MCF 10A (cell line): ENCODE measurements at regions of chr22 and their contacts with region 1.

Region 1: GRCh38 chr22:25777870-25778269 is 35.9 kb downstream of the MYO18B start:
- DNase-seq: peak; percentile 71
- H3K4me3 Mint-ChIP-seq: no peak overlapping the region
- H3K27ac Mint-ChIP-seq: no peak overlapping the region
- H3K4me1 Mint-ChIP-seq: no peaks in the 10 kb centered on the region
- H3K27me3 Mint-ChIP-seq: no peaks in the 10 kb centered on the region
- CTCF ChIP-seq: peak; percentile 31

Region 2: DNA sequence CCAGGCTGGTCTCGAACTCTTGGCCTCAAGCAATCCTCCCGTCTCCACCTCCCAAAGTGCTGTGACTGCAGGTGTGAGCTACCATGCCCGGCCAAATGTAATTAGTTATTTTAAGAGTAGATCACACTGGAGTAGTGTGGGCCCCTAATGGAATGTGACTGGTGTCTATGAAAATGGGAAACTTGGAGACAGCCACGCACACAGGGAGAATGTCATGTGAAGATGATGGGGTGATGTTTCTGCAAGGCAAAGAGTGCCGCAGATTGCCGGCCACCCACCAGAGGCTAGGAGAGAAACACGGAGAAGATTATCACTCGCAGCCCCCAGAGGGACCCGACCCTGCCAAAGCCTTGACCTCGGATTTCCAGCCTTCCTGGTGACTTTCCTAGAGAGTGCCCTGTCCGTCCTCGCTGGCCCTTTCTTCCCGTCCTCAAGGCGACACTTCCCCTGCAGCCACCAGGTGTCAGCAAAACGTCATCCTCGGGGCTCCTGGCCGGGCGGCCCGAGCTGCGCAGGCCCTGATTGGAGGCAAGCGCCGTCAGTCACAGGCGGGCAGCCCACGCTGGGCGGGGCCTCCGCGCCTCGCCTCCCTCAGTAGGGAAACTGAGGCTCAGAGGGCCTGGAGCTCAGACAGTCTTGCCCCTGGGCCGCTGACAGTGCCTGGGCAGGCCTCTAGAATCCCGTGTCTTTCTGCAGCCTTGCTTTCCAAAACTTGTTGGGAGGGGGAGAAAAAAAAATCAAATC is 542.2 kb before region 1 on chr22:
- CTCF ChIA-PET with region 1: interaction called, 5 read pairs
- POLR2A ChIA-PET with region 1: no interaction called
- intact Hi-C with region 1: loop called (anchors 5 kb)
- DNase-seq: peak; percentile 80
- H3K4me3 Mint-ChIP-seq: no peak overlapping the region
- H3K27ac Mint-ChIP-seq: no peak overlapping the region
- H3K4me1 Mint-ChIP-seq: peaks cover 7% of the 10 kb centered on the region
- H3K27me3 Mint-ChIP-seq: peaks cover 8% of the 10 kb centered on the region
- CTCF ChIP-seq: peak; percentile 86

Region 3: DNA sequence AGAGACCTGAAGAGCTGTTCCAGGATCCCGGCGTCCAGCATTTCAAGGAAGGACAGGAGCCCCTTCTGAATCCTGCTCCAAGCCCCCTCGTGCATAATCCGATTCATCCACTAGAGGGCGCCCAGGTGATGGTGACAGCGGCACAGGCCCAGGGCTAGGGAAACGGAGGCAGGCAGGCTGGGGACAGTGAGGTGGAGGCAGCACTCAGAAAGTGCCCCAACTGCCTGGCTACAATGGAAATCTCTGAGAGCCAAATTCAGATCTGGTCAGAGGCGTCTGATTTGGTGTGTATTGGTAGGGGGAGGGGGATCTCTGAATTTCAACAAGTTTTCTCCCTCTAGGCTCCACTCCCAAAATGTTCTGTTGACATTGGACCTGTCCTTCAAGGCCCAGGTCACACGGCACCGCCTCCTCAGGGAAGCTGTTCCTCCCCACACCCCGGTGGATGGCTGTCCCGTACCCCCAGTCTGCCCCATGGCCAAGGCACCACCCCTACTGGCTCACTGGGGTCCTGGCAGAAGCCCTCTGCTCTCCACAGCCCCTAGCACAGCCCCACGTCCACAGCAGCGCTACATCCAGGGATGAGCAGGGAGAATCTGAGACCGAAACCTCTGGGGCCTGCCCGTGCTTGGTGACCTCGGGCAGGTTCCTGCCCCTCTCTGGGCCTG is 415.5 kb before region 1 on chr22:
- CTCF ChIA-PET with region 1: interaction called, 5 read pairs
- POLR2A ChIA-PET with region 1: no interaction called
- intact Hi-C with region 1: loop called (anchors 5 kb)
- DNase-seq: peak; percentile 56
- H3K4me3 Mint-ChIP-seq: no peak overlapping the region
- H3K27ac Mint-ChIP-seq: no peak overlapping the region
- H3K4me1 Mint-ChIP-seq: peaks cover 6% of the 10 kb centered on the region
- H3K27me3 Mint-ChIP-seq: no peaks in the 10 kb centered on the region
- CTCF ChIP-seq: peak; percentile 84

Region 4: GRCh38 chr22:25465949-25466348 is 311.9 kb before region 1 on chr22:
- CTCF ChIA-PET with region 1: interaction called, 51 read pairs
- POLR2A ChIA-PET with region 1: no interaction called
- intact Hi-C with region 1: loop called (anchors 1 kb)
- DNase-seq: no peak
- H3K4me3 Mint-ChIP-seq: no peak overlapping the region
- H3K27ac Mint-ChIP-seq: peak overlapping the region; percentile 31
- H3K4me1 Mint-ChIP-seq: no peaks in the 10 kb centered on the region
- H3K27me3 Mint-ChIP-seq: no peaks in the 10 kb centered on the region
- CTCF ChIP-seq: no peak

Region 5: DNA sequence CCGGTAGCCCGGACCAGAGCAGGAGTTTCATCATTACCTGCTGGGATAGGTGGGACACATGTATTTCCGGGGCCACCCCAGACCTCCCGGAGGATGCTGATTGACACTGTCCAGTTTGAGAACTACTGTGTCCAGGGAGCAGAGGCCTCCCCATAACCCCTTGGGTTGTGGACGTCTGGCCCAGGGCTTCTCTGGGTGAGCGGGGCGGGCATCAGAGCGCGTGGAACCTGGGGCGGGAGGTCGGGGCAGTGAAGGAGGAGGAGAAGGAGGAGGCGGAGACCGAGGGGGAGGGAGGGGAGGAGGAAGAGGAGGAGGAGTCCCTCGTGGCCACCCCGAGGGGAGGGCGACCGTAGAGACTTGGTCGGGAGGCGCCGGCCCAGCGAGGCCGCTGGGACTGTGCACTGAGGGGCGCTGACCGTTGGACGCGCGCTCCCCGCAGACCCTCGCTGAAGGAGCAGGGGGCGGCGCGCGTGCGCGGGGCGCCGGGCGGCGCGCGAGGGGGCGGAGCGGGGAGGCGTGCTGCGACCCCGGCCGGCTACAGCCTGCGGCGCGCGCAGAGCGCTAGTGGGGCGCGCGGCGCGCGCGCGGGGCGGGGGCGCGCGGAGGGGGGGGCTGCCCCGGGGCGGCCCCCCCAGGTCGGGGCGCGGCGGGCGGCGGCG is 213.4 kb before region 1 on chr22 and contains the start of gene GRK3:
- CTCF ChIA-PET with region 1: interaction called, 27 read pairs
- POLR2A ChIA-PET with region 1: no interaction called
- intact Hi-C with region 1: loop called (anchors 1 kb)
- DNase-seq: peak; percentile 75
- H3K4me3 Mint-ChIP-seq: peak within 1 kb of the TSS; percentile 77
- H3K27ac Mint-ChIP-seq: peak within 1 kb of the TSS; percentile 3
- H3K4me1 Mint-ChIP-seq: peaks cover 5% of the 10 kb centered on the region
- H3K27me3 Mint-ChIP-seq: no peaks in the 10 kb centered on the region
- CTCF ChIP-seq: no peak
- total RNA-seq, gene GRK3: 6.5 and 7.9 TPM in 2 replicates

Region 6: GRCh38 chr22:25702040-25702439 is 75.8 kb before region 1 on chr22:
- CTCF ChIA-PET with region 1: interaction called, 15 read pairs
- POLR2A ChIA-PET with region 1: no interaction called
- intact Hi-C with region 1: loop called (anchors 1 kb)
- DNase-seq: peak; percentile 16
- H3K4me3 Mint-ChIP-seq: no peak overlapping the region
- H3K27ac Mint-ChIP-seq: no peak overlapping the region
- H3K4me1 Mint-ChIP-seq: no peaks in the 10 kb centered on the region
- H3K27me3 Mint-ChIP-seq: no peaks in the 10 kb centered on the region
- CTCF ChIP-seq: peak; percentile 55

Region 7: GRCh38 chr22:25765801-25766200 is 12.1 kb before region 1 on chr22:
- CTCF ChIA-PET with region 1: interaction called, 16 read pairs
- POLR2A ChIA-PET with region 1: no interaction called
- intact Hi-C with region 1: no loop called
- DNase-seq: no peak
- H3K4me3 Mint-ChIP-seq: no peak overlapping the region
- H3K27ac Mint-ChIP-seq: no peak overlapping the region
- H3K4me1 Mint-ChIP-seq: peaks cover 3% of the 10 kb centered on the region
- H3K27me3 Mint-ChIP-seq: no peaks in the 10 kb centered on the region
- CTCF ChIP-seq: no peak

Region 8: GRCh38 chr22:25824828-25825423 is 47.1 kb after region 1 on chr22:
- CTCF ChIA-PET with region 1: no interaction called
- POLR2A ChIA-PET with region 1: no interaction called
- intact Hi-C with region 1: no loop called
- DNase-seq: no peak
- H3K4me3 Mint-ChIP-seq: no peak overlapping the region
- H3K27ac Mint-ChIP-seq: no peak overlapping the region
- H3K4me1 Mint-ChIP-seq: no peaks in the 10 kb centered on the region
- H3K27me3 Mint-ChIP-seq: peaks cover 31% of the 10 kb centered on the region
- CTCF ChIP-seq: no peak

Region 9: GRCh38 chr22:26023104-26023775 is 245.4 kb after region 1 on chr22:
- CTCF ChIA-PET with region 1: no interaction called
- POLR2A ChIA-PET with region 1: no interaction called
- intact Hi-C with region 1: no loop called
- DNase-seq: no peak
- H3K4me3 Mint-ChIP-seq: no peak overlapping the region
- H3K27ac Mint-ChIP-seq: no peak overlapping the region
- H3K4me1 Mint-ChIP-seq: no peaks in the 10 kb centered on the region
- H3K27me3 Mint-ChIP-seq: no peaks in the 10 kb centered on the region
- CTCF ChIP-seq: no peak

Region 10: GRCh38 chr22:26234296-26234695 is 456.4 kb after region 1 on chr22:
- CTCF ChIA-PET with region 1: no interaction called
- POLR2A ChIA-PET with region 1: no interaction called
- intact Hi-C with region 1: no loop called
- DNase-seq: no peak
- H3K4me3 Mint-ChIP-seq: no peak overlapping the region
- H3K27ac Mint-ChIP-seq: no peak overlapping the region
- H3K4me1 Mint-ChIP-seq: no peaks in the 10 kb centered on the region
- H3K27me3 Mint-ChIP-seq: peaks cover 78% of the 10 kb centered on the region
- CTCF ChIP-seq: no peak